Panc1 (cell line): ENCODE measurements at regions of chr18 and their contacts with region 1.

Region 1: DNA sequence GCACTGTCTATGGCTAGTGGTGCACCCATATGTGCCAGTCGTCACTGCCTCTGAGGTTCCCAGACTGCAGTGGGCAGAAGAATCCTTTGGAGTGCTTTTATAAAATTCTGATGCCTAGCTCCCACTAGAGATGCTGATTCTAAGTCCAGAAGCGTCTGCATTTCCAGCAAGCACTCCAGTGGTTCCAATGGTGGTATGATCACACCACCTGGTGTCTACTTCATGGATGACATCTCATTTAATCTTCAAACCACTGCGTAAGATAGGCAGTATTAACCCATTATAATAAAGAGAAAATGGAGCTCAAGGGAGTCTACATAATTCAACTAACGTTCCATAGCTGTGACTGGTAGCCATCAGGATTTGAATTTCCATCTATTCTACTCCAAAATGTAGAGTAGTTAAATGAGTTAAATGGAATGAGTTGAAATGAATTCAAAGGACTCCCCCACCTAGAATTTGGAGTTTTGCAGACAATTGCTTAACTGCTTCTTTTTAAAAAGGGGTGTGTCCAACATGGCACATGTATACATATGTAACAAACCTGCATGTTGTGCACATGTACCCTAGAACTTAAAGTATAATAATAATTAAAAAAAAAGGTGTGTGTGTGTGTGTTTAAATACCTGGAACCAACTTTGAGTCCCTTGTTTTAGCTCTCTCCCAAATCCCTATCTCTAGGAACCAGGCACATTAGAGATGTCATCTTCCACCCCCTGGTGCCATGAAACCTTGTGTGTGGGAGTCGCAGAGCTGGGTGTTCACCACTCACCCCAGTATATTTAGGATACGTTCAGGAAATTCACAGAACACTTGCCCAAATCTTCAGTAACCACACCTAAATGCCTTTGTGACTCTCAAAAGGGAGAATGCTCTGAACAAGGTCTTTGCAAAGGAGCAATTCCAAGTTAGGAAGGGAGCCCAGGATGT is 14.1 kb downstream of the LAMA3 start:
- DNase-seq: peak; percentile 50
- ATAC-seq: peak; percentile 95
- H3K4me3 ChIP-seq: no peak overlapping the region
- H3K27ac ChIP-seq: no peak overlapping the region
- H3K4me1 ChIP-seq: no peaks in the 10 kb centered on the region
- H3K27me3 ChIP-seq: no peaks in the 10 kb centered on the region; the same call in 1 of the 2 replicates
- CTCF ChIP-seq: peak; percentile 76

Region 2: DNA sequence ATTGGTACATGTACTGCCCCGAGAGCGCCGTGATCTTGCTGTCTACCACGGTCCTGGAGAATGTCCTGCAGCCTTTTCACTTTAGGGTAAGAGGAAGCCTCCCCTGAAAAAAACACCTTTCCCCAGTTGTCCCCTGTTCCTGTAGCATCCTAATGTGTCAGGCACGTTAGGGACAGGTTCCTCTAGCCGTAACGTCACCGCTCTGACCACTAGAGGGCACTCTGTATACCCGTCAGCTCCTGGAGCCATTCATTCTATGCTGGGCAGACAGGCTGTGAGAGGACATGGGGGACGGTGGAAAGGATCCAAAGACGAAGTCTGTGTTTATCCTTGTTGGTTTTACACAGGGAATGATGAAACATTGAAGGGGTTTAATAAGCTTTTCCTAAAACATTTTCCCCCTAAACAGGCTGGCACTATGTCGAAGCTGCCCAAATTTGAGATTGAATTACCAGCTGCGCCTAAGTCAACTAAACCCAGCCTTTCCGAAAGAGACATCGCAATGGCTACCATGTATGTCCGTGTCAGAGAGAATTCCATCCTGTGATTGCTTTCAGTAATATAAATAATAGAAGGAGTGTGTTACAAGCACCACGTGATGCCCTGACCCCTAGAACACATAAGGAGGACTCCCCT is 187.3 kb before region 1 on chr18:
- CTCF ChIA-PET with region 1: interaction called, 8 read pairs
- POLR2A ChIA-PET with region 1: no interaction called
- in situ Hi-C with region 1: no loop called
- intact Hi-C with region 1: loop called (anchors 10 kb)
- DNase-seq: peak; percentile 53
- ATAC-seq: peak; percentile 99
- H3K4me3 ChIP-seq: no peak overlapping the region
- H3K27ac ChIP-seq: no peak overlapping the region
- H3K4me1 ChIP-seq: no peaks in the 10 kb centered on the region
- H3K27me3 ChIP-seq: no peaks in the 10 kb centered on the region
- CTCF ChIP-seq: peak; percentile 97

Region 3: GRCh38 chr18:23626451-23627279 is 76.7 kb before region 1 on chr18:
- CTCF ChIA-PET with region 1: interaction called, 18 read pairs
- POLR2A ChIA-PET with region 1: no interaction called
- in situ Hi-C with region 1: no loop called
- intact Hi-C with region 1: loop called (anchors 2 kb)
- DNase-seq: peak; percentile 48
- ATAC-seq: no peak
- H3K4me3 ChIP-seq: no peak overlapping the region
- H3K27ac ChIP-seq: no peak overlapping the region
- H3K4me1 ChIP-seq: peaks cover 13% of the 10 kb centered on the region; the same call in 1 of the 2 replicates
- H3K27me3 ChIP-seq: no peaks in the 10 kb centered on the region
- CTCF ChIP-seq: no peak

Region 4: GRCh38 chr18:23682045-23682444 is 21.3 kb before region 1 on chr18:
- CTCF ChIA-PET with region 1: no interaction called
- POLR2A ChIA-PET with region 1: no interaction called
- in situ Hi-C with region 1: no loop called
- intact Hi-C with region 1: no loop called
- DNase-seq: no peak
- ATAC-seq: no peak
- H3K4me3 ChIP-seq: no peak overlapping the region
- H3K27ac ChIP-seq: no peak overlapping the region
- H3K4me1 ChIP-seq: peaks cover 2% of the 10 kb centered on the region; the same call in 1 of the 2 replicates
- H3K27me3 ChIP-seq: peaks cover 9% of the 10 kb centered on the region; the same call in 1 of the 2 replicates
- CTCF ChIP-seq: no peak

Region 5: GRCh38 chr18:24014062-24014985 is 311.0 kb after region 1 on chr18 and contains the start of gene TTC39C:
- CTCF ChIA-PET with region 1: no interaction called
- POLR2A ChIA-PET with region 1: no interaction called
- in situ Hi-C with region 1: no loop called
- intact Hi-C with region 1: no loop called
- DNase-seq: no peak
- ATAC-seq: peak; percentile 87
- H3K4me3 ChIP-seq: peak within 1 kb of the TSS; percentile 73 to 74
- H3K27ac ChIP-seq: peak within 1 kb of the TSS; percentile 44
- H3K4me1 ChIP-seq: peaks cover 16% of the 10 kb centered on the region
- H3K27me3 ChIP-seq: peaks cover 10% of the 10 kb centered on the region; the same call in 1 of the 2 replicates
- CTCF ChIP-seq: peak; percentile 12; the same call in 1 of the 2 replicates
- total RNA-seq, gene TTC39C: 14.8 TPM

Region 6: GRCh38 chr18:24333071-24333470 is 629.7 kb after region 1 on chr18:
- CTCF ChIA-PET with region 1: no interaction called
- POLR2A ChIA-PET with region 1: no interaction called
- in situ Hi-C with region 1: no loop called
- intact Hi-C with region 1: no loop called
- DNase-seq: no peak
- ATAC-seq: no peak
- H3K4me3 ChIP-seq: no peak overlapping the region
- H3K27ac ChIP-seq: no peak overlapping the region
- H3K4me1 ChIP-seq: no peaks in the 10 kb centered on the region
- H3K27me3 ChIP-seq: no peaks in the 10 kb centered on the region
- CTCF ChIP-seq: no peak